Heart right ventricle (tissue), 16 donors: ENCODE measurements at regions of chr22 and their contacts with region 1.

Region 1: GRCh38 chr22:20430720-20431510 is 6.7 kb downstream of the SCARF2 start:
- DNase-seq: peak in 1 of 2 donors; percentile 44
- ATAC-seq: peak in 7 of 8 donors; percentile 9 to 63 (median 39)
- H3K4me3 ChIP-seq: peak overlapping the region in 7 of 10 donors; percentile 10 to 61 (median 12)
- H3K27ac ChIP-seq: no peak overlapping the region
- H3K4me1 ChIP-seq: peaks cover 3 to 45% (median 26%) of the 10 kb centered on the region in 9 donors
- H3K27me3 ChIP-seq: peaks cover 0 to 94% (median 23%) of the 10 kb centered on the region in 7 donors
- CTCF ChIP-seq: peak in 7 of 9 donors; percentile 4 to 45 (median 29)

Region 2: GRCh38 chr22:20495861-20496681 is 65.2 kb after region 1 on chr22:
- intact Hi-C with region 1: loop called in 1 of 10 experiments (anchors 10 kb)
- DNase-seq: peak; percentile 91 to 93
- ATAC-seq: peak; percentile 96 to 98 (median 97)
- H3K4me3 ChIP-seq: peak overlapping the region; percentile 61 to 86 (median 78)
- H3K27ac ChIP-seq: peak overlapping the region; percentile 68 to 97 (median 94)
- H3K4me1 ChIP-seq: peaks cover 2 to 28% (median 22%) of the 10 kb centered on the region in 9 donors
- H3K27me3 ChIP-seq: no peaks in the 10 kb centered on the region
- CTCF ChIP-seq: peak; percentile 83 to 96 (median 91)

Region 3: DNA sequence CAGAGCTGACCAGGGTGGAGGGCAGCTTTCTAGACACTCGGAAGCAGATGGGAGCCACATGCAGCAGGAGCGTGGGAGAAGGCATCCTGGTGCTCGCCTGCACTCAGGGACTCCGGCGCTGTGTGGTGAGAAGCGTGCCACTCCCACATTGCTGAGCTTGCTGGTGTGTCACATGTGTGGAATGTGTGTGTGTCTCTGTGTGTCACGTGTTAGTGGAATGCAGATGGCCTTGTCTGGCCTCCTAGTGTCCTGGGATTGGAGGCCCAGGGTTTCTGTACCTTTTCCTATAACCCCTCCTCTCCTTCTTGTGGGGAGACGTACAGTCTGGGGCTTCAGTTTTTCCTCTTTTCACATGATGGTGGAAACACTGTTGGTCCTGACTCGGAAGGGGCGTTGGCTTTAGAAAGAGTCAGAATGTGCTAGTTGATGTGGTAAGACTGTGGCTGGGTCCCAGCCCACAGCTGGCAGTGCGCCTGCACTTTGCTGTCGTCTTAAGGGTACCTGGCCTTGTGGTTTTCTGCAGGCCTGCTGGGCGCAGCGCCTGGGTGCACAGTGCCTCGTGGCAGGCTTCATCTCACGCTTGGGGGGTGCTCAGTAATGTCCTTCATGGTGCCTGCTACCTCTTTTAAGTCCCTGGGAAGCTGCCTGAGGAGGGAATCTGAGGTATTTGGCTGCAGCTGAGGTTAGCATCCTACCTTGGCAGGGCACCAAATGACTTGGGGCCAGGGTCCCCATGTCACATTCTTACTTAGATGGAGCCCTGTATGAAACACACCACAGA is 138.3 kb after region 1 on chr22:
- intact Hi-C with region 1: loop called in 1 of 10 experiments (anchors 10 kb)
- DNase-seq: peak; percentile 44 to 65
- ATAC-seq: peak; percentile 67 to 87 (median 73)
- H3K4me3 ChIP-seq: no peak overlapping the region
- H3K27ac ChIP-seq: peak overlapping the region in 8 of 10 donors; percentile 5 to 58 (median 31)
- H3K4me1 ChIP-seq: peaks cover 11 to 70% (median 27%) of the 10 kb centered on the region in 9 donors
- H3K27me3 ChIP-seq: no peaks in the 10 kb centered on the region
- CTCF ChIP-seq: no peak